Sciatic nerve (tissue), 2 donors: ENCODE measurements at regions of chr2 and their contacts with region 1.

Region 1: GRCh38 chr2:104476563-104476988 is 377.3 kb upstream of the POU3F3 start:
- DNase-seq: no peak
- ATAC-seq: no peak

Region 2: DNA sequence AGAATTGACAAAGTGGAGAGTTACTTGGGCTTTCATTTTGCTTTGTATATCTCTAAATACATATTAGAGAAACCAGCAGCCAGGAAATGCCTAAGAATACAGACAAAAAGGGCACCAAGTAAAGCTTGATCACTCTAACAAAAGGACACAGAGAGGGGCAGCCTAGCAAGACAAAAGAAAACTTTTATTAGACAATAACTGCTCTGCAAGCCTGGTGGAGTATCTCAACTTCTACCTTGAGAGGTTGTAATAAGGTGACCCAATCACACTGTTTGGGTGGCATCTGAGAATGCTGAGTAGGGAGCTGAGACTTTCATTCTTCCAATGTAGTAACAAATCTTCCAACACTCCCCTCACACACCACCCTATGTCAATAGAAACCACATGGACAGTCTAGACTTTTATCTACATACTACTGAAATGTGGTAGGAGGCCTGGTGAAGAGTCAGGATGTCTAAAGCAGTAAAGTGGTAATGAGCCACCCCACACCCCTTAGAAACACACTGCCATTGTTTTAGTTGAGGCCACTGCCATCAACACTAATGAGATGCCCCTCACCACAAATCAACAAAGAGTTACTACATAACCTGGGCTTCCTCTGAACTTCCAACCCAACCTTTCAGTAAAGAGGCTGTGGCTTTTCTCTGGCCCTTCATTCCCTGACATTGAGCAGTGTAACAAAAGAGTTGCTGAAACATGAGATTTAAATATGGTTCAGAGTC is 349.4 kb before region 1 on chr2:
- intact Hi-C with region 1: loop called (anchors 5 kb)
- DNase-seq: no peak
- ATAC-seq: no peak

Region 3: DNA sequence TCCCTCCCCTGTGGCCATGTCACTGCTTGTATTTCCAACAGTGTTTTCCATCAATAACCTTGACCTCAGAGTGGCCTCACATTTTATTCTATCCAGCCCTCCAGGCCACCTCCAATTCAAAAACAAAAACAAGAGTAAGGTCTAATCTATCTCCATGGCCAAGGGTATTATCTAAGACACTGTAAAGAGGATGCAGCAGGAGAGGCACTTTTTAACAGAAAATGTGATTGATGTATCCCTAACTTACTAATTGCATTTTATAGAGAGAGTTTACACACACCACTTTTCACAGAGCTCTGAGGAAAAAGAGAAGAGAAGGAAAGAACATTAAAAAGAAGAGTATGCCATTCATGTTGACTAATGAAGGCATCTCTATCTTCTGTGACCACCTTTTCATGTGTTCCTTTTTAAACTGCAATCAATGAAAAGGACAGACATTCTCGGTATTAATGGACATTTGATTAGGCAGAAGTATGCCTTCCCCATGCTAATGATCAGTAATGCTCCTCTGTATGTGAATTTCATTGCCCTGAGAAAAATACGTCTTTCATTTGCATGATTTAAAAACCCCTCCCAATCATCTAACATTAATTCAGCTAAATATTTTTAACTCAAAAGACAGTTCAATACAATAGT is 275.9 kb before region 1 on chr2:
- intact Hi-C with region 1: no loop called
- DNase-seq: no peak
- ATAC-seq: no peak